ENCODE measurements at regions of chr4 and their contacts with region 1.

Region 1: DNA sequence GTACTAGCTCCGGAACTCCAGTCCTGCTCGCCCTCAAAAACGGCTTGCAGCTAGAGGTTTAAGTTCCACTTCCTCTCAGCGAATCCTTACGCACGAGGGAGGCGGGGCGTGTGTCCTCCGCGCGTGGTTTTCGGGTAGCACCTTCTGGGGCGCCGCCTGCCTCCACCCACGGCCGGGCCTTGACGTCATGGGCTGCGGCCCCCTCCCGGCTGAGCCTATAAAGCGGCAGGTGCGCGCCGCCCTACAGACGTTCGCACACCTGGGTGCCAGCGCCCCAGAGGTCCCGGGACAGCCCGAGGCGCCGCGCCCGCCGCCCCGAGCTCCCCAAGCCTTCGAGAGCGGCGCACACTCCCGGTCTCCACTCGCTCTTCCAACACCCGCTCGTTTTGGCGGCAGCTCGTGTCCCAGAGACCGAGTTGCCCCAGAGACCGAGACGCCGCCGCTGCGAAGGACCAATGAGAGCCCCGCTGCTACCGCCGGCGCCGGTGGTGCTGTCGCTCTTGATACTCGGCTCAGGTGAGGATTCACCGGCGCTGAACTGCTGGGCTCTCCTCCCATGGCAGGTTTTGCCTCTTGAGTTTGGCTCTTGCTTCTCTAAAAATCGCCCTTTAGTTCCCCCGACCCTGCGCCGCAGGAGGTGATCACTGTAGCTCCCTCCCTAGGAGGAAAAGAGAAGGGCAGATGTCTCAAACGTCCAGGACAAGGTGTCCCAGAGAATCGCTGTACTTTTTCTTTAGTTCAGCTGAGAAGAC is at the start of gene AREG:
- DNase-seq: peak; percentile 91
- H3K4me3 Mint-ChIP-seq: peak within 1 kb of the TSS; percentile 74
- H3K27ac Mint-ChIP-seq: peak within 1 kb of the TSS; percentile 39
- H3K4me1 Mint-ChIP-seq: peaks cover 14% of the 10 kb centered on the region
- H3K27me3 Mint-ChIP-seq: no peaks in the 10 kb centered on the region
- total RNA-seq, gene AREG: 0.36 to 0.74 TPM

Region 2: DNA sequence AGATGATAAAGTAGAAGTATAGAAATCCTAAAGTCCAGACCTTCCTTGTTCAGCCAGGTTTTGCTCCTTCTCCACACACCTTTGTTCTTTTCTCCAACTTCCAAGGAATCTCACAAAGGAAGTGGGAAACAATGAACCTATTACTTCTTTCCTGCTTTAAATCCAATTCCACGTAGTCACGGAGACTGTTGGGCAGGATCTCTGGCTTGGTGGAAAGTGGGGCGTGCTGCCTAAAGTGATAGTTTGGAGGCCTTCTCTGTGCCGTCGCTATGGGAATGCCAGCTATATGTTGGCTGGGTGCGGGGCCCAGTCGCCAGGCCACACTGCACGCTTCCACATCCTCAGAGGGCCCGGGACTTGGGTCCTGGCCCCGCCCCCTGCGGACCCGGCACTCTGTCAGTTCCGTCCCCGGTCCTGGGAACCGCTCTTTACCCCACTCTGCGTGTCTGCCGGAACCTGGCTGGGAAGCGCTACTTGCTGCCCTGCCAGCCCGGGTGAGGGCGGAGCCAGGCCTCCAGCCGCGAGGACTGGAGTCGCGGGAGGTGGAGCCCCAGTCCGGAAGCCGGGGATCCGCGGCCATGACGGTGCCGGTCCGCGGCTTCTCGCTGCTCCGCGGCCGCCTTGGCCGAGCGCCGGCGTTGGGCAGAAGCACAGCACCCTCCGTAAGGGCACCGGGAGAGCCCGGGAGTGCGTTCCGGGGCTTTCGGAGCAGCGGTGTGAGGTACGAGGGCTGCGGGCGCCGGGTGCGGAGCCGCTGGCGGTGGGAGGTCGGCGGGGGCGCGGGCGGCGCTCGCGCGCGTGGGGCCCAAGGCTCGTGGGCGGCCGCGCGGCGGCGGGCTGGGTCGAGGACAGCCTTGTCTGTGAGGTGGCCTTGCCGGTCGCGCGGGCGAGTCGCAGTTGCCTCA is 287.3 kb before region 1 on chr4 and contains the start of gene MTHFD2L:
- CTCF ChIA-PET with region 1: no interaction called
- POLR2A ChIA-PET with region 1: no interaction called
- intact Hi-C with region 1: loop called (anchors 2 kb)
- DNase-seq: peak; percentile 87
- H3K4me3 Mint-ChIP-seq: peak within 1 kb of the TSS; percentile 88
- H3K27ac Mint-ChIP-seq: peak within 1 kb of the TSS; percentile 74
- H3K4me1 Mint-ChIP-seq: peaks cover 17% of the 10 kb centered on the region
- H3K27me3 Mint-ChIP-seq: peaks cover 2% of the 10 kb centered on the region
- total RNA-seq, gene MTHFD2L: 5.4 to 6.5 TPM

Region 3: DNA sequence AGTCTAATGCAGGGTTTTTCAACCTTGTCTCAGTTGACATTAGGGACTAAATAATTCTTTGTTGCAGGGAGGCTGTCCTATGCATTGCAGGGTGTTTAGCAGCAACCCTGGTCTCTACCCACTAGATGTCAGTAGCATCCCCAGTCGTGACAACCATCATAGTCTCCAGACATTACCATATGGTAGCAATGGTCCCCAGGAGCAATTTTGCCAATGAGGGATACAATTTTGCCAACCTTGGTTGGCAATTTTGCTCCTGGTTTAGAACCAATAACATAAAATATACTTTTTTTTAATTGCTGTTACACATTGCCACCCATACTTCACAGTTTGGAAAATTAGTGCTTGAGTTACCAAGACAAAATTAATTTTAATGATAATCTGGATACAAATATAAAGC is 74.2 kb before region 1 on chr4:
- CTCF ChIA-PET with region 1: interaction called, 8 read pairs
- POLR2A ChIA-PET with region 1: no interaction called
- intact Hi-C with region 1: loop called (anchors 2 kb)
- DNase-seq: peak; percentile 36
- H3K4me3 Mint-ChIP-seq: no peak overlapping the region
- H3K27ac Mint-ChIP-seq: no peak overlapping the region
- H3K4me1 Mint-ChIP-seq: peaks cover 3% of the 10 kb centered on the region
- H3K27me3 Mint-ChIP-seq: peaks cover 18% of the 10 kb centered on the region

Region 4: DNA sequence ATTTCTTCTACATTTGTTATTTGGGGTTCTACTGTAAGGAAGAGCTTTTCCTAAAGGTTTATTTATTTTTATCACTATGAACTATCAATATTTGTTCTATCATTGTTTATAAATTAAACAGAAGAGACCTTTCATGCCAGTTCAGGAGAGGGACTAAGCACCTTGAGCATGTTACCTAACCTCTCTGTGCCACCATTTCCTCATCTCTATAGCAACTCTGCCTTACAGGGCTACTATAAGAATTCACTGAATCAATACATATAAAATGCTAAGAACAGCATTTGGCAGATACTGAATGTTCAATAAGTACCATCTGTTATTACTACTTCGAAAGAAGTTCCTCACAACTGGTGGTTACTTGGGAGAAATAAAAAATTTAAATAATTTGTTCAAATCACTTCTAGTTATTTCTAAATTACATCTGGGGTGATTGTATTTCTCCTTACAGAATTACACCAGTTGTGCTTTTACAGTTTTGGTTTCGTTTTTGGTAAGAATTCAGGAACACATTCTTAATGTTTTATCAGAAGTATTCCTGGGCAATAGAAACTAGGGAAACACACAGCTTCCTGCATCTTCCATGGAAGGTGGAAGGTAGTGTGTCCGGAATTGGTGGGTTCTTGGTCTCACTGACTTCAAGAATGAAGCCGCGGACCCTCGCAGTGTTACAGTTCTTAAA is 47.2 kb before region 1 on chr4:
- CTCF ChIA-PET with region 1: interaction called, 4 read pairs
- POLR2A ChIA-PET with region 1: no interaction called
- intact Hi-C with region 1: loop called (anchors 2 kb)
- DNase-seq: no peak
- H3K4me3 Mint-ChIP-seq: peak overlapping the region; percentile 86
- H3K27ac Mint-ChIP-seq: peak overlapping the region; percentile 81
- H3K4me1 Mint-ChIP-seq: peaks cover 6% of the 10 kb centered on the region
- H3K27me3 Mint-ChIP-seq: no peaks in the 10 kb centered on the region

Region 5: DNA sequence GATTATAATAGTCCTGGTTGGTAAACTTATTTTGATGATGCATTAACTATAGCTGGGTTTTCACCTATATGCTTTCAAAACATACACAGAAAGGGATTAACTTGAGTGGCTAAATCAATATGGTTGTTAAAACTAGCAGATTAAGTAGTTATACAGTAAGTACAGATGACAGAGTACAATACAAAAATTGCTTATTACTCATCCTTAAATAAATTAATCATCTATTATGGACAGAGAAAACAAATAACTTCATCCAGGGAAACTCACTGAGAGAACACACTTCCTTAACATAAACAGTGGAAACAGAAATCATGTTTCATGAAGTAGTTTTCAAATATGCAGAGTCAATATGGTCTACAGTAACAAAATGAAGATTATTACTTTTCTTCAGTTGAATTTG is 133.3 kb after region 1 on chr4:
- CTCF ChIA-PET with region 1: no interaction called
- POLR2A ChIA-PET with region 1: no interaction called
- intact Hi-C with region 1: no loop called
- DNase-seq: no peak
- H3K4me3 Mint-ChIP-seq: no peak overlapping the region
- H3K27ac Mint-ChIP-seq: no peak overlapping the region
- H3K4me1 Mint-ChIP-seq: no peaks in the 10 kb centered on the region
- H3K27me3 Mint-ChIP-seq: peaks cover 1% of the 10 kb centered on the region

Region 6: DNA sequence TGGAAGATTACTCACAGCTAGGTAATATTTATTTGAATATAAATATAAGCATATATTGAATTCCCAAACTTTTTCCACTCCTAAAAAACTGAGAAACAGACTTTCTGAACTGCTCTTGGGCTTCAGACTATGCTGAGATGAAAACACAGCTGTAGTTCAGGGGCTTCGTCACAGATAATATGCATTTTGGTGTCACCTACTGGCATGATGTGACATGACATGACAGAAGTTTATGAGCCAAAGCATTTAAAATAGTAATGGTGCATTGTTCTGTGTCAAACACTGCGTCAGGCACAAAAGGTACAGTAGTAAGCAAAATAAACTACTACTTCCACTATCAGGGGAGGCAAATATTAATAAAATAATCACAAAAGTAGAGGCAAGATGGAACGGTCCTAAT is 178.0 kb after region 1 on chr4:
- CTCF ChIA-PET with region 1: interaction called, 6 read pairs
- POLR2A ChIA-PET with region 1: no interaction called
- intact Hi-C with region 1: loop called (anchors 5 kb)
- DNase-seq: no peak
- H3K4me3 Mint-ChIP-seq: no peak overlapping the region
- H3K27ac Mint-ChIP-seq: no peak overlapping the region
- H3K4me1 Mint-ChIP-seq: peaks cover 17% of the 10 kb centered on the region
- H3K27me3 Mint-ChIP-seq: no peaks in the 10 kb centered on the region

Measured in activated CD4-positive, alpha-beta memory T cell treated with anti-CD3 and anti-CD28 coated beads for 36 hours (primary cell).